Right cardiac atrium (tissue), 5 donors: ENCODE measurements at regions of chr9 and their contacts with region 1.

Region 1: GRCh38 chr9:5582835-5583195 is 46.1 kb upstream of the RIC1 start:
- DNase-seq: peak in 2 of 3 donors; percentile 43 to 81
- ATAC-seq: peak; percentile 80 to 84
- H3K4me3 ChIP-seq: no peak overlapping the region
- H3K27ac ChIP-seq: no peak overlapping the region
- H3K4me1 ChIP-seq: peaks cover 4% of the 10 kb centered on the region
- H3K27me3 ChIP-seq: no peaks in the 10 kb centered on the region

Region 2: DNA sequence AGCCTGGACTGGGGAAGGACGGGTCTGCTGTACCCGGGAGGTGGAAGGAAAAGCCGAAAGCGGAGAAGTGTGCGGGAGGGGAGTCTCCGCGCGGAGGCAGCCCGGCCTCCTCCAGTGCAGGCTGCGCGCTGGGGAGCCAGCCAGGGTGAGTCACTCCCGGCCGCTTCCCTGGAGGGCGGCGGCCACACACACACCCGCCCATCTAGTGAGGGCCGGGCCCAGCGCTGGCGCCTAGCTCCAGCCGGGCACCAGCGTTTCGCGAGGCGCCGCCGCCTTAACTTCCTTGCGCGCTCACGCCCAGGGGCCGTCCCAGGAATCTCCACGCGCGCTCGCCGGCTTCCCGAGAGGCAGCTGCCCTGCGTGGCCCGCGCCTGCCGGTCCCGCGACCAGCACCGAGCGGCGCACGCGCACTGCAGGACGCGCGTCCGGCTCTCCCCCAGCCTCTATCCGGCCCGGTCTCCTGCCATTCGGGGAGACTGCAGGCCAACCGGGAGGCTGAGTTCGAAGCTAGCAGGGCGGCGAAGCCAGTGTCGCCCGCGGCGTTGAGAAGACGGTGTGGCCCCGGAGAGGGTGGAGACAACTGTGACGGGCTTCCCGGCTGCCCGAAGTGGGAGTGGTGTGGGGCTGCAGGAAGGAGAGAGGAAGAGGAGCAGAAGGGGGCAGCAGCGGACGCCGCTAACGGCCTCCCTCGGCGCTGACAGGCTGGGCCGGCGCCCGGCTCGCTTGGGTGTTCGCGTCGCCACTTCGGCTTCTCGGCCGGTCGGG is 598.0 kb before region 1 on chr9 and contains the start of gene JAK2:
- intact Hi-C with region 1: no loop called
- DNase-seq: peak; percentile 95 to 98 (median 97)
- ATAC-seq: peak; percentile 97 to 99
- H3K4me3 ChIP-seq: peak within 1 kb of the TSS; percentile 83
- H3K27ac ChIP-seq: peak within 1 kb of the TSS; percentile 95
- H3K4me1 ChIP-seq: peaks cover 6% of the 10 kb centered on the region
- H3K27me3 ChIP-seq: no peaks in the 10 kb centered on the region
- total RNA-seq, gene JAK2: 10.4 to 14.6 (median 12.2) TPM

Region 3: GRCh38 chr9:5191985-5192384 is 390.8 kb before region 1 on chr9:
- intact Hi-C with region 1: loop called in 1 of 4 experiments (anchors 5 kb)
- DNase-seq: no peak
- ATAC-seq: no peak
- H3K4me3 ChIP-seq: no peak overlapping the region
- H3K27ac ChIP-seq: no peak overlapping the region
- H3K4me1 ChIP-seq: no peaks in the 10 kb centered on the region
- H3K27me3 ChIP-seq: no peaks in the 10 kb centered on the region

Region 4: DNA sequence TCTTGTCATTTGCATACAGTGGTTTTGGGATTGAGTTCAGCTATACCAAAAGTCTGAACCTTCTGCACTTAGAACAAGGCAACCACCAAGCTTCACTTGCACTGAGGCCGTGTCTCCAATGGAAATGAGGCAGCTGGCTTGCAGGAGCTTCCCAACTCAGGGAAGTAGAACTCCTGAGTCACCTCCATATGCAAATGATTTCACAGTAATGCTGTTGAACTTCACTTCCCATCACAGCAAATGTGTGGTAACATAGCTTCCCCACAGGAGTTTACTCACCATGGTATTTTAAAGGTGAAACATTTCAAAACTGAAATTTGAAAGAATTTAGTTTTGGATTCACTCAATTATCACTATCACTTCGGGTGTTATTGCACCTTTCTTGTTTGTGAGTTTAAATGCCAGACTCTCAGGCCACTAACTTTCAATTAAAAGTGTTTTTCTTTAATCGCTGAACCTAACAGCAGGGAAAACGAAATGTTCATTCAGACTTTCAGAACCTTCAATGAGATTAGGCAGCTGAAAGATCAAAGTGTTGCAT is 123.5 kb before region 1 on chr9:
- intact Hi-C with region 1: loop called in 1 of 4 experiments (anchors 5 kb)
- DNase-seq: no peak
- ATAC-seq: no peak
- H3K4me3 ChIP-seq: no peak overlapping the region
- H3K27ac ChIP-seq: no peak overlapping the region
- H3K4me1 ChIP-seq: no peaks in the 10 kb centered on the region
- H3K27me3 ChIP-seq: no peaks in the 10 kb centered on the region

Region 5: DNA sequence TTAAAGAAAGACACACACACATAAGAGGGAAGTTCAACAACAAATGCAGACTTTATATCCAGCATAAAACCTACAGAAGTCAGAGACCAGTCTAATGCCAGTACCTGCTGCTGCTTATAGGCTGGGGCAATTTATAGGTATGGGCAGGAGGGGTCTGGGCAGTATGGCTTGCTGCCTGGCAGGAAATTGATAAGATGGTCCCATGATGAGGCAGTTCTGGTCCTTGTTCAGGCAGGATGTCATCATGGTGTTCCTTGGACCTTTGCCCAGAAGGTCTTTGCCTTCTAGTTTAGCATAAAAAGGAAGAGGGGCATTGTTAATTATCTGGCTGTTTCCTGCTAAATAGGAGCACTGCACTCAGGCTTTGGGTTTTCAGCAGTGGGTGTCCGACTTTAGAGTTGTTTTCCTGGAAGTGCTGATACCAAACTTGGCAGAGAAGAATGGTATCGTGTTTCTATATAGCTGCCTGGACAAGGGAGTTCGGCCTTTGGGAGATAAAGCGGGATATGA is 82.9 kb before region 1 on chr9:
- intact Hi-C with region 1: loop called in 1 of 4 experiments (anchors 10 kb)
- DNase-seq: peak in 2 of 3 donors; percentile 43 to 53
- ATAC-seq: peak; percentile 67 to 90
- H3K4me3 ChIP-seq: no peak overlapping the region
- H3K27ac ChIP-seq: peak overlapping the region; percentile 97
- H3K4me1 ChIP-seq: peaks cover 19% of the 10 kb centered on the region
- H3K27me3 ChIP-seq: no peaks in the 10 kb centered on the region

Region 6: DNA sequence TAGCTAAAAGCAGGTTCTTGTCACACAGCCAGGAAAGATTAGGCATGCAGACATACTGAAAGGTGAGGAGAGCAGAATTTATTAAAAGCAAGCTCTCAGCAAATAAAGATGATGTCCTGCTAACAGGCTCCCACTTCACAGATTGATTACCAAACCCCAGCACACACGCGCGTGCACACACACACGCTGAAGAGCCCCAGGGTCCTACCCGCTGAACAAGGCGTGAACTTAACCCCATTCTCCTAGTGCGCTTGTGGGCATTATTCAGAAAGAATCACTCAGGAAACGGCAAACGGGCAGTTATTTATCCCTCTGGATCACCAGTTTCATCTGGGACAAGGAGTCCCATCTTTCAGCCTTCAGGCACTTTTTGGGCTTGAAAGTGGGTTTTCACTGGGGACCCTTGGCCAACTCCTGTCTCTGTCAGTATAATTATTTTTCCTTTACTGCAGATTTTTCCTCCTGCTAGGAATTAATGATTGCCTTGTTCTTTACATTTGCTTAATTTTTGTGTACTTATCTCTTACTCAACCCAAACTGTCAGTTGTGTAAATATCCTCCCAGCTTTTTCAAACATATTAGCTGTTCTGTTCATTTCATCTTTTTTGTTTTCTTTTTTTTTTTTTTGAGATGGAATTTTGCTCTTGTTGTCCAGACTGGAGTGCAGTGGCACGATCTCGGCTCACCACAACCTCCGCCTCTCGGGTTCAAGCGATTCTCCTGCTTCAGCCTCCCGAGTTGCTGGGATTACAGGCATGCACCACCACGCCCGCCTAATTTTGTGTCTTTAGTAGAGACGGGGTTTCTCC is 138.7 kb after region 1 on chr9:
- intact Hi-C with region 1: no loop called
- DNase-seq: no peak
- ATAC-seq: no peak
- H3K4me3 ChIP-seq: no peak overlapping the region
- H3K27ac ChIP-seq: no peak overlapping the region
- H3K4me1 ChIP-seq: no peaks in the 10 kb centered on the region
- H3K27me3 ChIP-seq: no peaks in the 10 kb centered on the region